ENCODE measurements at regions of chr18 and their contacts with region 1.

Region 1: DNA sequence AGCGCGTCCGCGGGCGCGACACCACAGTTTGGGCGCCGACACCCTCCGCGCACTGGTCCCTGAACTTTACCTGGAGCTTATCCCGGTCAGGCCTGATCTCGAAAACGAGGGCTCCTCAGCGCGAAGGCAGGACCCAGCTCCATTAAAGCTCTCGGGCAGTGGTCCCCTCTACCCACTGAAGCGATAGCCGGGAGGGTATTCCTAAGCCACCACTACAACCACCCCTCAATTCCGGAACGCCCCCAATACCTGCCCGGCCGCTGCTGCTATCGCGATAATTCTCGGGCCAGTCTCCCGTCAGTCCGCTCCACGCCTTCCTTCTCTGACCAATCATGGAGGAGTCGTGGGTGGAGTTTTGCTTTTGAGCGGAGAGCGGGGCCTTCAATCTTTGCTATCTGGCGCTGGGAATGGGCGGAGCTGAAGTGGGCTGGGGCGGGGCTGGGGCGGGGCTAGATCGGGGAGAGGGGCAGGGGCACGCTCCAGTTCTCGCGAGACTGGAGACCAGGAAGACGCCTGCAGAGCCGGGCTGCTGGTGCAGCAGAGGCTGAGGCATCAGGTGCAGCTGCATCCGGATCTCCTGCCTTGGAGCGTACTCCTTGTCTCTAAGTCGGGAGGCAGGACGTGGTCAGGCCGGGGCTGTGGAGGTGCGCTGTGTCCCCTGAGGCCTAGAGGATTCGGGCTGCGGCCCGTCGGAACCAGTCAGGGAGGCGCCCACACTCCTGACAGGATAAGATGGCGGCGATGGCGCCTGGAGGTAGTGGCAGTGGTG is at the starts of genes PIGN and RELCH:
- DNase-seq: peak; percentile 91 to 95 (median 92)
- ATAC-seq: peak; percentile 88
- H3K4me3 ChIP-seq: peak within 1 kb of the TSS; percentile 100
- H3K27ac ChIP-seq: peak within 1 kb of the TSS; percentile 90
- H3K4me1 ChIP-seq: peaks cover 0 to 7% of the 10 kb centered on the region in 2 experiments; a peak in 2 of 5 replicates
- H3K27me3 ChIP-seq: no peaks in the 10 kb centered on the region
- CTCF ChIP-seq: no peak
- EP300 ChIP-seq: no peak
- POLR2A ChIP-seq: peak; percentile 79
- RAD21 ChIP-seq: no peak
- polyA plus RNA-seq, gene PIGN: 14.6 to 15.2 TPM
- polyA plus RNA-seq, gene RELCH: 1.4 to 2.0 TPM

Region 2: DNA sequence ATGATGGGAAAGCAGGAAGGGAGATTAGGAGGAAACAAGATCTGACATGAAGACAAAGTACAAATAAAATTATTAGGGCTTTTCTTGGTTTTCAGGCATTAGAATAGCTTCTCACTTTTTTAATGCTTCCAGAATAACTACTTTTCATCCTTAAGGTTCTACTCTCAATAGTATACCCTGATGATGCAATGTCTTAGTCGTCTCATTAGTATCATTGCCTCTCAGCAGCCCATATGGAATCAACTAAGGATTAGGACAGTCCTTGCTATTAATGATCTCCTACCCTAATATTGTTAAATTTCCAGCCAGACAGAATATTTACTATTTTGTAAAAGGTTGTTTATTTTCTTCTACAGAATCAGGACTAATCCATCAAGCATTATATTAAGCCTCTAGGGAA is 56.0 kb after region 1 on chr18:
- CTCF ChIA-PET with region 1: interaction called, 42 read pairs
- POLR2A ChIA-PET with region 1: interaction called, 4 read pairs
- in situ Hi-C with region 1: loop called (anchors 5 kb)
- intact Hi-C with region 1: no loop called
- DNase-seq: no peak
- ATAC-seq: no peak
- H3K4me3 ChIP-seq: no peak overlapping the region
- H3K27ac ChIP-seq: no peak overlapping the region
- H3K4me1 ChIP-seq: no peaks in the 10 kb centered on the region
- H3K27me3 ChIP-seq: no peaks in the 10 kb centered on the region
- CTCF ChIP-seq: no peak
- EP300 ChIP-seq: no peak
- POLR2A ChIP-seq: no peak
- RAD21 ChIP-seq: no peak

Region 3: DNA sequence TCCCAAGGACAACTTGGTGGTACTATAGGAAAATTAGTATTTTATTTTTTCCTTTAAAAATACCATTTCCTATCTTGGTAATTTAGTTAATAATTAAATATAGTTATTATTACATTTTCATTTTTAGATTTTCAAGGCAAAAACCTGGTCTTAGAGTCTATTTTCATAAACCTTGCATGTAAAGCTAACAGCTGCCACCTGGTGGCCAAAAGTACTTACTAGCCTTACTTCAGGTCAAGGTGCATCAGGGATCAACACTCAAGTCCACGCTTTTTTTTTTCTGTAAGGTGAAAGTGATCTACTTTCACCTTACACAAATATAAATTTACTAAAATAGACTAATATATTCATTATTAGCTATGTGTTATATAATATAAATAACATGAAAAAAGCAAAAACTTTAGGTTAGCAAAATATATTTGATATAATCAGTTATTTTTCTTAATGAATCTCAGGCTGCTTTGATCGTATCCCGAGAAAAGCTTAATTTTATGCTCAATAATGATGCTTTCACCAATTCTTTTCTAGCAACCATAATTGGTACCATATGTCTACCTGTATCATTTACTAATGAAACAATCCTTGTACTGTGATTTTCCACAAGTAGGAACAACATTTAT is 62.6 kb after region 1 on chr18:
- CTCF ChIA-PET with region 1: interaction called, 42 read pairs
- POLR2A ChIA-PET with region 1: interaction called, 3 read pairs
- in situ Hi-C with region 1: loop called (anchors 5 kb)
- intact Hi-C with region 1: loop called (anchors 1 kb)
- DNase-seq: peak; percentile 27 to 79 (median 54)
- ATAC-seq: peak; percentile 72
- H3K4me3 ChIP-seq: no peak overlapping the region
- H3K27ac ChIP-seq: no peak overlapping the region
- H3K4me1 ChIP-seq: no peaks in the 10 kb centered on the region
- H3K27me3 ChIP-seq: no peaks in the 10 kb centered on the region
- CTCF ChIP-seq: peak; percentile 48 to 65 (median 51); a peak in 4 of 6 replicates
- EP300 ChIP-seq: no peak
- POLR2A ChIP-seq: no peak
- RAD21 ChIP-seq: peak; percentile 62

Region 4: GRCh38 chr18:62324917-62325805 is 138.2 kb after region 1 on chr18 and contains the start of gene TNFRSF11A:
- CTCF ChIA-PET with region 1: no interaction called
- POLR2A ChIA-PET with region 1: no interaction called
- in situ Hi-C with region 1: no loop called
- intact Hi-C with region 1: loop called (anchors 10 kb)
- DNase-seq: peak; percentile 46 to 83 (median 80)
- ATAC-seq: peak; percentile 95
- H3K4me3 ChIP-seq: peak within 1 kb of the TSS; percentile 37
- H3K27ac ChIP-seq: no peak within 1 kb of the TSS
- H3K4me1 ChIP-seq: peaks cover 4 to 20% of the 10 kb centered on the region in 2 experiments; a peak in 3 of 5 replicates
- H3K27me3 ChIP-seq: peaks cover 20 to 30% of the 10 kb centered on the region in 2 experiments
- CTCF ChIP-seq: peak in 2 of 3 experiments; percentile 25 to 48; a peak in 2 of 6 replicates
- EP300 ChIP-seq: no peak
- POLR2A ChIP-seq: no peak
- RAD21 ChIP-seq: no peak
- polyA plus RNA-seq, gene TNFRSF11A: not detected

Region 5: GRCh38 chr18:62982600-62983251 is 795.8 kb after region 1 on chr18:
- CTCF ChIA-PET with region 1: interaction called, 3 read pairs
- POLR2A ChIA-PET with region 1: no interaction called
- in situ Hi-C with region 1: loop called (anchors 25 kb)
- intact Hi-C with region 1: loop called (anchors 10 kb)
- DNase-seq: peak; percentile 38 to 63 (median 46)
- ATAC-seq: peak; percentile 84
- H3K4me3 ChIP-seq: no peak overlapping the region
- H3K27ac ChIP-seq: no peak overlapping the region
- H3K4me1 ChIP-seq: no peaks in the 10 kb centered on the region; a peak in 3 of 5 replicates
- H3K27me3 ChIP-seq: no peaks in the 10 kb centered on the region
- CTCF ChIP-seq: peak; percentile 56 to 74 (median 73)
- EP300 ChIP-seq: no peak
- POLR2A ChIP-seq: no peak
- RAD21 ChIP-seq: peak; percentile 69 to 85